ENCODE measurements at regions of chr11 and their contacts with region 1.

Region 1: DNA sequence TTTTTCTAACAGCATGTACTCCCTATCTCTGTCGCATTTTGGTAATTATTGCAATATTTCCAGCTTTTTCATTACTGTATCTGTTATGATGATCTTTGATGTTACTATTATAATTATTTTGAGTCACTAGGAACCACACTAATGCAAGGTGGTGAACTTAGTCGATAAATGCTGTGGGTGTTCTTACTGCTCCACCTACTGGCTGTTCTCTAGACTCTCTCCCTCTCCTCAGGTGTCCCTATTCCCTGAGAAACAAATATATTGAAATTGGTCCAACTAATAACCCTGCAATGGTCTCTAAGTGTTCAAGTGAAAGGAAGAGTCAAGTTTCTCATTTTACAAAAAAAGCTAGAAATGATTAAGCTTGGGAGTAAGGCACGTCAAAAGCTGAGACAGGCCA is 10.5 kb downstream of the ARL14EP start:
- DNase-seq: no peak
- ATAC-seq: no peak
- H3K4me3 Mint-ChIP-seq: no peak overlapping the region
- H3K27ac Mint-ChIP-seq: no peak overlapping the region
- H3K4me1 Mint-ChIP-seq: peaks cover 16% of the 10 kb centered on the region
- H3K27me3 Mint-ChIP-seq: no peaks in the 10 kb centered on the region

Region 2: DNA sequence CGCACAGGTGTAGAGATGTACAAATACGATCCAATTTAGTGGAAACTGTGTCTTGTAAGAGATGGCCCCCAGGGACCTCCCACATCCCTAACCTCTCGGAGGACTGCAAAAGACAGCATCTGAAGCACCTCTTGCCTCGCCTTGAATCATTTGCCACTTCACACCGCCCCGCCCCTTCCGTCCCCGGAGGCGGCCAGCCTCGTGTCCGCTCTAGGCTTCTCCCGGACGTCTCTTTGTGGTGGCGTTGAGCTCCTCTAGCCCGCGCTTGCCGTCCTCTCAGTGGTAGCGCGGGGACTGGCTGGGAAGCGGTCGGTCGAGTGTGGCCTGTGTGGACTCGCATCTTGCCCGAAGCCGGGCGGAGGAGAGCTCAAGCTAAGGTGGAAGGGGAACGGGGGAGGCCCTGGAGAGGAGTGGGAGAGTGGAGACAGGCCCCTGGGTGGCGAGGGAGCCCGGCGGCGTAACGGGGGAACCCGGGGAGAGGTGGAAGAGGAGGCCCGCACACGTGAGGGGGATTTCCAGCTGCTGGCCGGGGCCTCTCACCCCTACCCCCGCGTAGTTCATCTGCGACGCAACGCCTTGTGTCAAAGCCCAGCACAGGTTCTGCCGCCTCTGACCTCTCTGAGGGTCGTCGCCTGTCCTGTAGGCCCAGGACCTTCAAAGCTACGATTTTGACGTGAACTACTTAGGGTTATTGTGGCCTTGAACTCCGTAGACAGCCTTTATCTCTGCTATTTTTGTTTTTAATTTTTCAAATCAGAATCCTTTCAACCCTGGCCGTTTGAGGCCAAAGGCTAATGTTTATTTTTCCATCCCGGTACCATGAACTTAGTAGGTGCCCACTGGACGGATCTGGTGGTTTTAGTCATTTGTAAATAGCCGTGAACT is 10.3 kb before region 1 on chr11 and contains the start of gene ARL14EP:
- CTCF ChIA-PET with region 1: interaction called, 16 read pairs
- DNase-seq: peak; percentile 94
- ATAC-seq: peak; percentile 90
- H3K4me3 Mint-ChIP-seq: peak within 1 kb of the TSS; percentile 98
- H3K27ac Mint-ChIP-seq: peak within 1 kb of the TSS; percentile 99
- H3K4me1 Mint-ChIP-seq: peaks cover 46% of the 10 kb centered on the region
- H3K27me3 Mint-ChIP-seq: peaks cover 2% of the 10 kb centered on the region
- total RNA-seq, gene ARL14EP: 28.3 to 36.1 TPM